ENCODE measurements at regions of chr11 and their contacts with region 1.

Region 1: DNA sequence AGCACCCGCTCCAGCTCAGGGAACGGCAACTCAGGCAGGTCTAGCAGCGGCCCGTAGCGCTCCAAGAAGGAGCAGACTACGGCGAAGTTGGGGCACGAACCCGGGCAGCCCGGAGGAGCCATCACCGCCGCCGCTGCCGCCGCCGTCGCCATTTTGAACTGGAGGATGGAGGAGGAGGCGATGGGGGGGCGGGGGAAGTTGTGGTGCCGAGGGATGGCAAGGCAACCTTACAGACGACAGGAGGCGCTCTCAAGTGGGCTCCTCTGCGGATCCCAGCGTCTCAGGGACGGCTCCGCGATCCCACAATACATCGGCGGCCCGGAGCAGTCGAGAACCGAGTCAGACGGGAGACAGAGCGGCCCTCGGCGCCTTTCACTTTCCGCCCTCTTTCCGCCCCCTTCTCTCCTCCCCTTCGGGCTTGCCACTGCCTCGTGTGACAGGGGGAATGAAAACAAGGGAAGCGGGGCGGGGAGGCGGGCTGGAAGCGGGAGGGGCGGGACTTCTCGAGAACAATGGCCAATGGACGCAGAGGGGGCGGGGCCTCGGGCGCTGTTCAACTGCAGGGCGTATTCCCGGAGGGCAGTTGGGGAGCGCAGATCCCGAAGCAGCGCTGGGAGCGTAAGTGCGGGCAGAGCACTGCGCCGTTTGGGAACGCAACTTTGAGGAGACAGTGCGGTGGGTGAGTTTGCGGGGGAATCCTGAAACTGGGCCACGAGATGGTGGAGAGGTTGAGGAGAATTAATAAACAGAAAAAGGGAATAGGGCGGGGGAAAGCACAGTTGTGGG is at the starts of genes AAMDC and RSF1:
- DNase-seq: peak; percentile 99
- H3K4me3 ChIP-seq: peak within 1 kb of the TSS; percentile 88 to 96 (median 91)
- H3K27ac ChIP-seq: peak within 1 kb of the TSS; percentile 53
- H3K4me1 ChIP-seq: peaks cover 13% of the 10 kb centered on the region
- H3K27me3 ChIP-seq: no peaks in the 10 kb centered on the region
- CTCF ChIP-seq: peak; percentile 61 to 93
- POLR2A ChIP-seq: peak; percentile 79
- total RNA-seq, gene AAMDC: 51.0 and 57.1 TPM in 2 replicates
- total RNA-seq, gene RSF1: 55.1 and 58.6 TPM in 2 replicates

Region 2: DNA sequence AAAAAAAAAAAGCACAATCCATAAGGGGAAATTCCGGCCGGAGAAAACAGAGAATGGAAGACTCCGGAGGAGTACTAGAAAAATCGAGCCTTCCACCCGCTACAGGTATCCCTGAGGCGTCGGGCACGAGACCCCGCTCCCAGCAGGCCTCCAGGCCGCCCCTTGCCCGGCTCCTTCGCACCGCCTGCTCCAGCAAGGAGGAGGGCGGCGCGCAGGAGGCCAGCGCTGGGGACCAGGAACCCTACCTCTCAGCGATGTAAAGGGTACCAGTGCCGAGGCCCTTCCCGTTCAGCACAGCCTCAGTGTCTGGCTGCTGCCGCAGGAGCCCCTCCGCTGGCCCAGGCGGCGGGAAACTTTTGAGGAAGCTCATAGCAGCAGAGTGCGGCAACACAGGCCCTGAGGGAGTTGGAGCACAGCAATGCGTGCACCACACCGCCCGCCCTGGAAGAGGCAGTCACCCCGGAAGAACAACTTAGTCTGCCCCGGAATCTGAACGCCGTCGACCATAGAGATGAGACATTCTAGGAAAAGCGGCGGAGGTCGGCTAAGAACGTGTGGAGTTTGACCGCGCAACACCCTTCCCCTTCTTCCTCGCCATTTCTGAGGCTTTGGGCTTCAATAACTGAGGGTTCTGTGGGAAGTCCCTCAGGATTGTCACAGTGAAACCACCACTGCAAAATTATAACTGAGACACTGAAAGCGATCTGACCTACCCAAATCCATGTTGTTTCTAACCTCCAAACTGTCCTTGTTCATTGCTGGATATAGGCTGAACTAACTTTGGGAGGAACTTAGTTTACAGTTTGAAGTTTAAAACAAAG is 183.2 kb before region 1 on chr11 and contains the start of gene CLNS1A:
- CTCF ChIA-PET with region 1: no interaction called
- POLR2A ChIA-PET with region 1: no interaction called
- dilution Hi-C with region 1: no loop called
- intact Hi-C with region 1: loop called (anchors 1 kb)
- DNase-seq: peak; percentile 90
- H3K4me3 ChIP-seq: peak within 1 kb of the TSS; percentile 61 to 88 (median 86)
- H3K27ac ChIP-seq: peak within 1 kb of the TSS; percentile 49
- H3K4me1 ChIP-seq: peaks cover 7% of the 10 kb centered on the region
- H3K27me3 ChIP-seq: no peaks in the 10 kb centered on the region
- CTCF ChIP-seq: no peak
- POLR2A ChIP-seq: peak; percentile 90
- total RNA-seq, gene CLNS1A: 89.9 and 99.7 TPM in 2 replicates

Region 3: GRCh38 chr11:77842441-77843121 is 21.8 kb after region 1 on chr11:
- CTCF ChIA-PET with region 1: no interaction called
- POLR2A ChIA-PET with region 1: no interaction called
- dilution Hi-C with region 1: no loop called
- intact Hi-C with region 1: loop called (anchors 2 kb)
- DNase-seq: peak; percentile 58
- H3K4me3 ChIP-seq: no peak overlapping the region
- H3K27ac ChIP-seq: peak overlapping the region; percentile 45
- H3K4me1 ChIP-seq: peaks cover 14% of the 10 kb centered on the region
- H3K27me3 ChIP-seq: no peaks in the 10 kb centered on the region
- CTCF ChIP-seq: no peak
- POLR2A ChIP-seq: no peak

Region 4: DNA sequence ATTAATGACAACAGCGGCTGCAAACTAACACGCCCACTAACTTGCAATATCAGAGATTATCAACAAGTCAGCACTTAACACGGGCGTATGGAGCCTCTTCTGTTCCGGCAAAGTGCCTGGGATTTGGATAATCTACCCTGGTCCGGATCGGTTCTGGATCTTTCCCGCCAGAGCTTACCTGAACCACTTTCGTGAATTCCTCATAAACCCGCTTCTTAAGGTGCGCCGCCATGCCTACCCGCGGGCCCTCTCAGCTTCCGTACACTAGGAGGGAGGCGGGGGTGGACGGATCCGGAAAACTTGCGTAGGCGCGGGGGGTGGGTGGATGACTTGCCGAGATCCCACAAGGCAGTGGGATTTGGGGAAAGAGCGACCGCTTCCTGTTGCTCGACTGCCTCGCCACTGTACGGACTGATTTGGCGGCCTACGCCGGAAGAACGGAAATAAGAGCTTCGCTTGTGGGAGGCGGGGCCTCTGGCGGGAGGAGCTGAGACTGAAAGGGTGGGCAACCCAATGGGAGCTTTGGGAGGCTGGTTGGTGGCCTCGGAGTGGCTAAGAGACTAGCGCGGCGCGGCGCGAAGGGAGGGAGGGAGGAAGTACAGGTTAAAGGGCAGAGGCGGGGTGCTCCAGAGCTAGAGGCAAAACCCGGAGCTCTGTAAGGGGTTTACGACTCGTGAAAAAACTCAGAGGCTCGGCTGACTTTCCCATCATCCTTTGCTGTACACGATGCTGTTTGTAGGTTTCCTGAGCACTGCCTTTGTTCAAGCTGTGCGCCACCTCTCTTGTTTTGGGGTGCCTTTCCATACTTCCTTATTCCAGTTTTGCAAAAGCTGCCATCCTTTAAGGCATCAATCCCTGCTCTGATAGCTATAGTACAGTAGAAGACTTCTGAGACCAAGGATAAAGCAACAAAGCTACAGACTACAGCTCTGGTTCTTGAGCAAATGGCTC is 173.9 kb after region 1 on chr11 and contains the start of gene INTS4:
- CTCF ChIA-PET with region 1: interaction called, 16 read pairs
- POLR2A ChIA-PET with region 1: interaction called, 4 read pairs
- dilution Hi-C with region 1: no loop called
- intact Hi-C with region 1: loop called (anchors 1 kb)
- DNase-seq: peak; percentile 100
- H3K4me3 ChIP-seq: peak within 1 kb of the TSS; percentile 75 to 99 (median 95)
- H3K27ac ChIP-seq: peak within 1 kb of the TSS; percentile 47
- H3K4me1 ChIP-seq: peaks cover 15% of the 10 kb centered on the region
- H3K27me3 ChIP-seq: no peaks in the 10 kb centered on the region
- CTCF ChIP-seq: no peak
- POLR2A ChIP-seq: peak; percentile 77
- total RNA-seq, gene INTS4: 37.8 and 39.2 TPM in 2 replicates

Region 5: GRCh38 chr11:78045851-78046485 is 225.2 kb after region 1 on chr11:
- CTCF ChIA-PET with region 1: interaction called, 4 read pairs
- POLR2A ChIA-PET with region 1: interaction called, 3 read pairs
- dilution Hi-C with region 1: no loop called
- intact Hi-C with region 1: loop called (anchors 1 kb)
- DNase-seq: peak; percentile 62
- H3K4me3 ChIP-seq: peak overlapping the region in 2 of 3 experiments; percentile 23 to 72
- H3K27ac ChIP-seq: no peak overlapping the region
- H3K4me1 ChIP-seq: peaks cover 8% of the 10 kb centered on the region
- H3K27me3 ChIP-seq: no peaks in the 10 kb centered on the region
- CTCF ChIP-seq: peak; percentile 97 to 99
- POLR2A ChIP-seq: no peak

Region 6: DNA sequence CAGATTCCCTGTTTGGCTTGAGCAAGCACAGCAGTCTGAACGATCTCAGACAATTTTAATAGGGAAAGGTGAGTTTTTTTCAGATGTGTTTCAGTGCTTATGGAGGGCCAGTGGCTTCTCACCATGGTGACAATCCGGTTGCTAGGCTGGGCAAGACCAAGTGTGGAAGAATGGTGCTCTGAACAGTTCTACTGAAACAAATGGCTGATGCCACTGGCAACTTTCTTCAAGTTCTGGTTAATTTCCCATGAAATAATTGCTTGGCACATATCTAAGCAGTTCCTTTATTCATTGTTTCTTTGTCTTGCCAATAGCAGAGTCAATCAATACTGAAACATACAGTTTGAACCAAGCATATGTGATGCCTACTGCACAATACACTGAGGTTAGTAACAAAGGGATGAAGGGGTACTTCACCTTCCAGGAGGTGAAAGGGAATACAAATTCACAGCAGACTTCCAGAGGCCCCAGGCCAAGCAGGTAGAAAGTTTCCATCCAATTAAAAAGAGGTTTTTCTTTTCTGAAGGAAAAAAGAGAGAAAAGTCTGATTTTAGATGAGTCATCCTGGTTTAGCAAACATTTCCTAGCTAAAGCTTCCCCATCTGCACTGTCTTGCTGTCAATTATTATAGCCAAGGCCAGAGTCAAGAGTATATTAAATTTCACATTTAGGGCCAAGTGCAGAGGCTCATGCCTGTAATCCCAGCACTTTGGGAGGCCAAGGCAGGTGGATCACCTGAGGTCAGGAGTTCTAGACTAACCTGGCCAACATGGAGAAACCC is 280.1 kb after region 1 on chr11:
- CTCF ChIA-PET with region 1: no interaction called
- POLR2A ChIA-PET with region 1: no interaction called
- dilution Hi-C with region 1: no loop called
- intact Hi-C with region 1: no loop called
- DNase-seq: no peak
- H3K4me3 ChIP-seq: no peak overlapping the region
- H3K27ac ChIP-seq: no peak overlapping the region
- H3K4me1 ChIP-seq: no peaks in the 10 kb centered on the region
- H3K27me3 ChIP-seq: no peaks in the 10 kb centered on the region
- CTCF ChIP-seq: no peak
- POLR2A ChIP-seq: no peak

Region 7: GRCh38 chr11:78112582-78113275 is 292.0 kb after region 1 on chr11:
- CTCF ChIA-PET with region 1: no interaction called
- POLR2A ChIA-PET with region 1: no interaction called
- dilution Hi-C with region 1: no loop called
- intact Hi-C with region 1: no loop called
- DNase-seq: no peak
- H3K4me3 ChIP-seq: no peak overlapping the region
- H3K27ac ChIP-seq: no peak overlapping the region
- H3K4me1 ChIP-seq: no peaks in the 10 kb centered on the region
- H3K27me3 ChIP-seq: no peaks in the 10 kb centered on the region
- CTCF ChIP-seq: no peak
- POLR2A ChIP-seq: no peak

Region 8: DNA sequence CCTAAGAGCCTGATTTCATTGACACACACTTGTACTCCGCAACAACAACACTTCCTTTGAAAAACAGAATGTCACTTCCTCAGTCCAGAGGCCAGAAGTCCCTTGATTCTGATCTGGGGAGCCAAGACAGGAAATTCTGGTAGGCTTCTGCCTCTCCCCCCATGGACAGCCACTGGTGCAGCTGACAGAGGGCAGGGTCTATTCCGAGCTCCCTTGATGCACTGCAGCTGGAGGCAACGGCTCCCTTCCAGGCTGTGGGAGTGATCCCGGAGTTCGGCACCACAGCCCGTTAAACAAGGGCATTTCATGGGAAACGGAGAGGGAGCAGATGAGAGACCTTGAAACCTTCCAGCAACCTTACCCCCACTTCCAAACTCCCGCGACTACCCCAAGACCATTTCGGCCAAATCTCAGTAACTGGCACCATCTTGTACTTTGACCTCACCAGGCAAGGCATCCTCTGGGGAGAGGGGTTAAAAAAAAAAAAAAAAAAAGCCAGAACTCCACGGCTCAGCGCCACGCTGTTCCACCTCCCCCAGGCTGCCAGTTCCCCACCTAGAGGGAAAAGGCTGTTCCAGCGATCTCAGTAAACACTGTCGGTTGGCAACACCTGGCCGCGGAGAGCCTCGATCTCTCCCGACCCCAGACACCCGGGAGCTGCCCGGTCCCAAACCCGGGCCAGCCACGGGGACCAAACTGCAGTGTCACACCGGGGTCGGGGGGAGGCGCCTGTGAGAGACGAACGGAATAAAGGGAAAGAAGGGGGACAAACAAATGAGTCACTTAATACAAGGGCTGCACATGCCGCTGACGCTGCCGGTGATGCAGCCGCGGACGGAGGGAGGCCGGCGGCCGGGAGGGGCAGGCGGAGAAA is 595.8 kb after region 1 on chr11:
- CTCF ChIA-PET with region 1: no interaction called
- POLR2A ChIA-PET with region 1: no interaction called
- dilution Hi-C with region 1: no loop called
- intact Hi-C with region 1: loop called (anchors 5 kb)
- DNase-seq: peak; percentile 91
- H3K4me3 ChIP-seq: peak overlapping the region; percentile 40 to 91 (median 75)
- H3K27ac ChIP-seq: peak overlapping the region; percentile 91
- H3K4me1 ChIP-seq: peaks cover 46% of the 10 kb centered on the region
- H3K27me3 ChIP-seq: no peaks in the 10 kb centered on the region
- CTCF ChIP-seq: peak; percentile 28 to 59
- POLR2A ChIP-seq: peak; percentile 58